K562 (cell line): ENCODE measurements at regions of chr17 and their contacts with region 1.

Region 1: GRCh38 chr17:1724506-1725362 is at the start of gene WDR81:
- DNase-seq: peak; percentile 80 to 88 (median 82)
- ATAC-seq: peak; percentile 78
- H3K4me3 ChIP-seq: peak within 1 kb of the TSS; percentile 67
- H3K27ac ChIP-seq: peak within 1 kb of the TSS; percentile 69; the same call in 2 of the 3 replicates
- H3K4me1 ChIP-seq: peaks cover 16 to 56% of the 10 kb centered on the region in 2 experiments; a peak in 4 of 5 replicates
- H3K27me3 ChIP-seq: no peaks in the 10 kb centered on the region
- CTCF ChIP-seq: peak in 1 of 3 experiments; percentile 1; a peak in 1 of 6 replicates
- EP300 ChIP-seq: no peak
- POLR2A ChIP-seq: no peak
- RAD21 ChIP-seq: no peak
- polyA plus RNA-seq, gene WDR81: 0.01 to 0.04 TPM

Region 2: GRCh38 chr17:1628856-1629646 is 95.7 kb before region 1 on chr17:
- CTCF ChIA-PET with region 1: no interaction called
- POLR2A ChIA-PET with region 1: no interaction called
- in situ Hi-C with region 1: no loop called
- intact Hi-C with region 1: no loop called
- DNase-seq: peak; percentile 93 to 98 (median 94)
- ATAC-seq: peak; percentile 89
- H3K4me3 ChIP-seq: peak overlapping the region; percentile 66
- H3K27ac ChIP-seq: peak overlapping the region; percentile 92
- H3K4me1 ChIP-seq: peaks cover 9 to 36% of the 10 kb centered on the region in 2 experiments
- H3K27me3 ChIP-seq: no peaks in the 10 kb centered on the region
- CTCF ChIP-seq: peak; percentile 9 to 65 (median 41); a peak in 3 of 6 replicates
- EP300 ChIP-seq: no peak
- POLR2A ChIP-seq: no peak
- RAD21 ChIP-seq: peak; percentile 56 to 68

Region 3: DNA sequence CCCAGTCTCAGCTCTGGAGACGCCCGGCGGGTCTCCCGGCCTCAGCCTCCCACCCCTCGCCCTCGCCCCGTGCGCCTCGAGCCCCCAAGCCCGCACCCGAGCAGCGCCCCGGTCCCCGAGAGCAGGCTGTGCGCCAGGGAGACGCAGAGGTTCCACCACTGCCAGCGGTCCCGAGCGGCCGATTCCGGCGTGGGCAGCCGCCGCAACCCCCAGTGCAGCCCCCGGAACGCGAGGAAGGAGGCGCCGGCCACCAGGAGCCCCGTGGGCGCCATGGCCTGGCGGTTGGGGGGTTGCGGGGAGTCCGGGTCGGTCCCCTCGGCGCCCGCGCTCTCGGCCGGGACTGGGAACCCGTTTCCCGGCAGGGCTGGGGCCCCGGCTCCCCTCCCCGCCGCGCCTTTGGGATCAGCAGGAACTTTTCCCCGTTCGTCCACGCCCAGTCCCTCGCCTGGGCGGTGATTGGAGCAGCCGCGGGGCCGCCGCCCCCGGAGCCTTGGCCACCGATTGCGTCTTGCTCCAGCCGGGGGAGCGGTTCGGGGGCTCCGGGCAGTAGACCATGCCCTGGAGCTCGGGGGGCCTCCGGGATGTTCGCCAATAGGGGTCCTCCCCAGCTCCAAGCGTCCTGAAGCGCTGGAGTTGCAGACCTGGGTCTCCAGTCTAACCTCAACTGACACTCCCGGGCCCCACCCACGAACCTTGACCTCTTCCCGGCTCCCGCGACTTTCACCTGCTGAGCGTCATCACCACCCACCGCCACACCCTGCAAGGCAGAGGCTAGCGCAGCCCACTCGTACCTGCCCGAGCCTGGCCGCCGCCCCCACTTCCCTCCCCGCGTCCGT is 14.5 kb before region 1 on chr17 and contains the start of gene TLCD2:
- CTCF ChIA-PET with region 1: no interaction called
- POLR2A ChIA-PET with region 1: no interaction called
- in situ Hi-C with region 1: no loop called
- intact Hi-C with region 1: no loop called
- DNase-seq: peak; percentile 64 to 65 (median 64)
- ATAC-seq: peak; percentile 70
- H3K4me3 ChIP-seq: peak within 1 kb of the TSS; percentile 53
- H3K27ac ChIP-seq: peak within 1 kb of the TSS; percentile 66
- H3K4me1 ChIP-seq: peaks cover 35 to 67% of the 10 kb centered on the region in 2 experiments
- H3K27me3 ChIP-seq: no peaks in the 10 kb centered on the region
- CTCF ChIP-seq: no peak
- EP300 ChIP-seq: no peak
- POLR2A ChIP-seq: 0 out of 2 replicates have a peak, but pooled peaks have one; percentile 45
- RAD21 ChIP-seq: no peak
- polyA plus RNA-seq, gene TLCD2: 0.10 to 0.13 TPM

Region 4: GRCh38 chr17:1783834-1784611 is 59.3 kb after region 1 on chr17:
- CTCF ChIA-PET with region 1: interaction called, 7 read pairs
- POLR2A ChIA-PET with region 1: no interaction called
- in situ Hi-C with region 1: no loop called
- intact Hi-C with region 1: loop called (anchors 5 kb)
- DNase-seq: peak; percentile 42 to 56 (median 48)
- ATAC-seq: peak; percentile 93
- H3K4me3 ChIP-seq: no peak overlapping the region
- H3K27ac ChIP-seq: peak overlapping the region; percentile 38; the same call in 1 of the 3 replicates
- H3K4me1 ChIP-seq: peaks cover 5 to 8% of the 10 kb centered on the region in 2 experiments; a peak in 4 of 5 replicates
- H3K27me3 ChIP-seq: no peaks in the 10 kb centered on the region
- CTCF ChIP-seq: peak; percentile 59 to 76 (median 66)
- EP300 ChIP-seq: no peak
- POLR2A ChIP-seq: no peak
- RAD21 ChIP-seq: peak; percentile 73 to 80